ENCODE measurements at regions of chr3 and their contacts with region 1.

Region 1: GRCh38 chr3:156449712-156450574 is 105.0 kb downstream of the SSR3 start:
- H3K4me3 ChIP-seq: no peak overlapping the region
- H3K27ac ChIP-seq: no peak overlapping the region
- H3K4me1 ChIP-seq: no peaks in the 10 kb centered on the region
- CTCF ChIP-seq: no peak

Region 2: DNA sequence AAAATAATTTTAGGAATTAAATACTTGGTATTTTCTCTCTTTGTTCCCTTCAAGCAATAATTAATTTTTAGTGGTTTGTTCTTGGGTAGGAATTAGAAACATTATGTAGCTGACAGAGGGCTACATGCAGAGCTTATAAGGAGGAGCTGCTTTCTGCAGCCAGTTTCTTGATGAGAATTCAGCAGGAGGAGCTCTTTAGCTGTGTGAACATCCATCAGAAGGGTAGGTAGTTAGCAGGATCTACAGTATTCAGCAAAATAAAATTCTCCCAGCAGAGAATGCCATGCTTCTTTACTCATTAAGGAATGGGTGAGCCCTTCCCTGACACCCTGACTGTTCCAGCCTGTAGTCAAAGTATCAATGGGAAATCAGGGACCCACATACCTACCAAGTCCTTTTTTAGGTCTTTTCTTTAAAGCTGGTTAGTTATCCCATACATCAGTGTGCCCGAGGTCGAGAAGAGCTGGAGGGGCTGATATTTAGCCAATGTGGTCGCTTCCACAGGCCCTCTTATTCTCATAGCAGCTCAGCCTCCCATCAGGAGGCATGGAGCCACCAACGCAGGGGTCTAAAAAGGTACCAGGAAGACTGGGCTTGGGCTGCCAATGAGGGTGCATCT is 275.6 kb before region 1 on chr3:
- CTCF ChIA-PET with region 1: interaction called, 13 read pairs
- POLR2A ChIA-PET with region 1: no interaction called
- H3K4me3 ChIP-seq: no peak overlapping the region
- H3K27ac ChIP-seq: no peak overlapping the region
- H3K4me1 ChIP-seq: no peaks in the 10 kb centered on the region
- CTCF ChIP-seq: no peak

Region 3: DNA sequence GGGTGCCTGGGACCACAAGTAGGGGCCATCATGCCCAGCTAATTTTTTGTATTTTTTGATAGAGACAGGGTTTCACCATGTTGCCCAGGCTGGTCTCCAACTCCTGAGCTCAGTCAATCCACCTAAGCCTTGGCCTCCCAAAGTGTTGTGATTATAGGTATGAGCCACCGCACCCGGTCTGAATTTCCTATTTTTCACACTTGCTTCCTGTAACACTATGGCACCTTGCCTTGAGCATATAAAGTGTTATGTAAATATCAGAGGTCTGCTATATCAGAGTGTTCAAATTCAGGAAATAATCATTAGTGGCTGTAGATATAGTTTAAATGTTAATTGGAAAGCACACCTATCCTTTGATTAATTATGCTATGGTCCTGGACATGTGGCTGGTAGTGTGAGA is 164.3 kb before region 1 on chr3:
- CTCF ChIA-PET with region 1: no interaction called
- POLR2A ChIA-PET with region 1: no interaction called
- H3K4me3 ChIP-seq: no peak overlapping the region
- H3K27ac ChIP-seq: no peak overlapping the region
- H3K4me1 ChIP-seq: no peaks in the 10 kb centered on the region
- CTCF ChIP-seq: no peak

Region 4: DNA sequence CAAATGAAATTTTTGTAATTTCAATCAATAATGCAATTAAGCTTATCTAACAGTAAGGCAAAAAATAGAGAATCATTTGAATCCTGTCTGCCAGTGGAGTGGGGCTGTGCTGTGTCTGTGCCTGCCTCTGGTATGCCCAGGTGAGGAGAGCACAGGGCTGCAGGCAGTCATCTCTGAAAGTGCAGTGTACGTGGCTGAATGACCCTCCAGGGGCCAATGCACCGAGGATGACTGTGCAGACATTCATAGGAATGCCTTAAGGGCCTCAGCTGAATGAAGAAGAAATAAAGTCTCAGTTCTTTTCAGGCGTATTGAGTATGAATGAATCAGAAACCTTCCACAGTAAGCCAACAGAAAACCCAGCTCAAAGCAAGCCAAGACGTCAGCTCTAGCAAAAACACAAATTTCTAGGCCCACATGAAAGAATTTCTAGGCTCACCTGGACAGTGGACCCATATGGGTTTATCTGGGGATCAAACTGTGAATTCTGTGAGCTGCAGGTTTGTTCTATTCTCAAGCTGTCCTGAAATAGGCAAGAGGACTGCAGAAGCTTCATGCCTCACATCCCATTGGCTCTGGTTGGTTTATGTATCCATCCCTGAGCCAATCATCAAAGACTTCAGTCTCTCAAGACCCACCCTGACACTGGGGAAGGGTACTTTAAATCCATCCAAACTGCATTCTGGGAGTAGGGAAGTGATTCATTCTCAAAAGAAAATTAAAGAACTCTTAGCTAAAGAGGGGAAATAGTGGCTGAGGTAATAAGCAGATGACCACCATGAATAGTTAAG is 18.4 kb before region 1 on chr3:
- CTCF ChIA-PET with region 1: interaction called, 10 read pairs
- POLR2A ChIA-PET with region 1: no interaction called
- H3K4me3 ChIP-seq: no peak overlapping the region
- H3K27ac ChIP-seq: no peak overlapping the region
- H3K4me1 ChIP-seq: no peaks in the 10 kb centered on the region
- CTCF ChIP-seq: no peak

Region 5: GRCh38 chr3:156472150-156472549 is 22.2 kb after region 1 on chr3:
- CTCF ChIA-PET with region 1: interaction called, 11 read pairs
- POLR2A ChIA-PET with region 1: no interaction called
- H3K4me3 ChIP-seq: no peak overlapping the region
- H3K27ac ChIP-seq: no peak overlapping the region
- H3K4me1 ChIP-seq: no peaks in the 10 kb centered on the region; the same call in 1 of the 2 replicates
- CTCF ChIP-seq: no peak

Region 6: GRCh38 chr3:156509189-156510174 is 59.5 kb after region 1 on chr3:
- CTCF ChIA-PET with region 1: interaction called, 37 read pairs
- POLR2A ChIA-PET with region 1: no interaction called
- H3K4me3 ChIP-seq: no peak overlapping the region
- H3K27ac ChIP-seq: no peak overlapping the region
- H3K4me1 ChIP-seq: no peaks in the 10 kb centered on the region
- CTCF ChIP-seq: no peak

Region 7: GRCh38 chr3:156519758-156520162 is 69.8 kb after region 1 on chr3:
- CTCF ChIA-PET with region 1: no interaction called
- POLR2A ChIA-PET with region 1: no interaction called
- H3K4me3 ChIP-seq: no peak overlapping the region
- H3K27ac ChIP-seq: no peak overlapping the region
- H3K4me1 ChIP-seq: no peaks in the 10 kb centered on the region
- CTCF ChIP-seq: no peak

Region 8: DNA sequence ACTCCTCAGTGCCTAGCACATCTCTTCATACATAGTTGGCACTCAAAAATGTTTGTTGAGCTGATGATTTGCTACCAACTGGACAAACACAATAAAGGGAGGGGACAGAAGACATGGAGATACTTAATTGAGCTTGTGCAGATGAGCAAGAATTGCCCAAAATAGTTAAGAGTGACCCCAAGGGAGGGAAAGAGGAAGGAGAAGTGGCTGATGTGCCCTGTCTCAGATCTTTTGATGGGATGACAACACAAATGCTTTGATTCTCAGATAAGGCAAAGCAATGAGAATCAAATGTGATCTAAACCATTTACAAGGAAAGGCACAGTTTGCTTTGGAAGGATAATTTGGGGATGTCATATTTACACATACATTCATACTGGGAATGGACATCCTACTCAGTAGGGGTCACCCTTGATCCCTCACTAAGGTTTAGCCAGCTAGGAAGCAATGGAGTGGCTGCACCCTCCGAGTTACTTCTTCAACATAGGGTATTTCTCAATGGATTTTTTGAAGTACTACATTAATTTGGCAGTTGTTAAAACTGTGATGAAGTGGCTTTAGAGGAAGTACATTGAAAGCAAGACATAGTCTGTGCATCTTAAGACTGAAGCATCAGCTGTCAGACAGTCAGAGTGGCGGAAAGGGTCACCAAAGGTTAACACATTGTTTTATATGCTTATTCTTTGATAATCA is 126.9 kb after region 1 on chr3:
- CTCF ChIA-PET with region 1: no interaction called
- POLR2A ChIA-PET with region 1: no interaction called
- H3K4me3 ChIP-seq: no peak overlapping the region
- H3K27ac ChIP-seq: no peak overlapping the region
- H3K4me1 ChIP-seq: no peaks in the 10 kb centered on the region
- CTCF ChIP-seq: no peak

Region 9: GRCh38 chr3:156926551-156926950 is 476.6 kb after region 1 on chr3:
- CTCF ChIA-PET with region 1: no interaction called
- POLR2A ChIA-PET with region 1: no interaction called
- H3K4me3 ChIP-seq: no peak overlapping the region
- H3K27ac ChIP-seq: no peak overlapping the region
- H3K4me1 ChIP-seq: no peaks in the 10 kb centered on the region
- CTCF ChIP-seq: no peak

Measured in HEK293 (cell line).